ENCODE measurements at regions of chr3 and their contacts with region 1.

Region 1: DNA sequence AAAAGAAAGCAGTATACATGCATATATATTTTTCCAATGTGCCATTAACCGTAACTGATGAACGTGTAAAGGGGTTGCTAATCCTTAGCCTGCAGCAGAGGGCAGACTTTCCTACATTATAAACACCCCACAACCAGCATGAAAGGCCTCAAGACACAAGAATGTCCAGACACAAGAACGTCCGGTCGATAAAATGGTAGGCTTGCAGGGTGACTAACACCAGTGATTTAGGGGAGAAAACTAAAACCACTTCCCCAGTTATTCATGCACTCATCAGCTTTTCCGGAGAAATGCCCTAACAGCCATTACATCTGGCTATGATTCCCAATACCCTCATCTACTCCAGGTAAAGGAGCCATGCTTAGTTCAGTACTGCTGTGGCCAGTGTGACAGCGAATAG is 57.4 kb downstream of the LRTM1 start:
- DNase-seq: peak; percentile 85
- ATAC-seq: peak; percentile 94
- H3K4me3 ChIP-seq: no peak overlapping the region
- H3K27ac ChIP-seq: peak overlapping the region; percentile 38; the same call in 1 of the 2 replicates
- H3K4me1 ChIP-seq: peaks cover 21% of the 10 kb centered on the region
- H3K27me3 ChIP-seq: no peaks in the 10 kb centered on the region
- CTCF ChIP-seq: peak; percentile 85

Region 2: GRCh38 chr3:53974324-53974723 is 896.1 kb before region 1 on chr3:
- CTCF ChIA-PET with region 1: no interaction called
- POLR2A ChIA-PET with region 1: no interaction called
- intact Hi-C with region 1: no loop called
- DNase-seq: no peak
- ATAC-seq: no peak
- H3K4me3 ChIP-seq: no peak overlapping the region
- H3K27ac ChIP-seq: no peak overlapping the region
- H3K4me1 ChIP-seq: no peaks in the 10 kb centered on the region
- H3K27me3 ChIP-seq: peaks cover 8% of the 10 kb centered on the region
- CTCF ChIP-seq: no peak

Region 3: GRCh38 chr3:54486317-54486716 is 384.1 kb before region 1 on chr3:
- CTCF ChIA-PET with region 1: no interaction called
- POLR2A ChIA-PET with region 1: no interaction called
- intact Hi-C with region 1: no loop called
- DNase-seq: no peak
- ATAC-seq: no peak
- H3K4me3 ChIP-seq: no peak overlapping the region
- H3K27ac ChIP-seq: no peak overlapping the region
- H3K4me1 ChIP-seq: no peaks in the 10 kb centered on the region
- H3K27me3 ChIP-seq: no peaks in the 10 kb centered on the region
- CTCF ChIP-seq: no peak

Region 4: GRCh38 chr3:54557541-54558419 is 312.6 kb before region 1 on chr3:
- CTCF ChIA-PET with region 1: no interaction called
- POLR2A ChIA-PET with region 1: no interaction called
- intact Hi-C with region 1: no loop called
- DNase-seq: no peak
- ATAC-seq: no peak
- H3K4me3 ChIP-seq: no peak overlapping the region
- H3K27ac ChIP-seq: no peak overlapping the region
- H3K4me1 ChIP-seq: no peaks in the 10 kb centered on the region
- H3K27me3 ChIP-seq: no peaks in the 10 kb centered on the region
- CTCF ChIP-seq: no peak

Region 5: DNA sequence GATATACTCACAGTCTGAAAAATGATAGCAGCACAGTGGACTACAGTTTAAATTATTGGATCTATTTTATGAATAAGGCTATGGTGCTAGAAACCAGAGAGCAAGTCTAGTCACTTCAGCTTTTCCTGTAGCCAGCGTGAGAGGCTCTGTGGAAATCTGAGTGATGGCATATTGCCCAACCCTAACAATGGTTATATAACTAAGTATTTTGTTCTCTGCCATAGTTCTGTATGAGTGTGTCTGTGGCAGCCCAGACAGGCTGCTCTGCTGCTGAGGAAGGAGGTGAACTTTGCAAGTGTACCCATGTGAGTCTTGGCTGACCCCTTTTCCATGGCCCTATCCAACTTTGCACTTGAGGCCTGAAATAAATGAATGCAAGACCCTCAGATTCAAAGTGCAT is 48.2 kb before region 1 on chr3:
- CTCF ChIA-PET with region 1: no interaction called
- POLR2A ChIA-PET with region 1: no interaction called
- intact Hi-C with region 1: no loop called
- DNase-seq: peak; percentile 18
- ATAC-seq: no peak
- H3K4me3 ChIP-seq: no peak overlapping the region
- H3K27ac ChIP-seq: no peak overlapping the region
- H3K4me1 ChIP-seq: no peaks in the 10 kb centered on the region
- H3K27me3 ChIP-seq: peaks cover 38% of the 10 kb centered on the region
- CTCF ChIP-seq: no peak

Region 6: GRCh38 chr3:54882129-54882833 is 11.9 kb after region 1 on chr3:
- CTCF ChIA-PET with region 1: no interaction called
- POLR2A ChIA-PET with region 1: no interaction called
- intact Hi-C with region 1: loop called (anchors 1 kb)
- DNase-seq: peak; percentile 95
- ATAC-seq: peak; percentile 90
- H3K4me3 ChIP-seq: no peak overlapping the region
- H3K27ac ChIP-seq: peak overlapping the region; percentile 76
- H3K4me1 ChIP-seq: peaks cover 24% of the 10 kb centered on the region
- H3K27me3 ChIP-seq: no peaks in the 10 kb centered on the region
- CTCF ChIP-seq: no peak

Region 7: DNA sequence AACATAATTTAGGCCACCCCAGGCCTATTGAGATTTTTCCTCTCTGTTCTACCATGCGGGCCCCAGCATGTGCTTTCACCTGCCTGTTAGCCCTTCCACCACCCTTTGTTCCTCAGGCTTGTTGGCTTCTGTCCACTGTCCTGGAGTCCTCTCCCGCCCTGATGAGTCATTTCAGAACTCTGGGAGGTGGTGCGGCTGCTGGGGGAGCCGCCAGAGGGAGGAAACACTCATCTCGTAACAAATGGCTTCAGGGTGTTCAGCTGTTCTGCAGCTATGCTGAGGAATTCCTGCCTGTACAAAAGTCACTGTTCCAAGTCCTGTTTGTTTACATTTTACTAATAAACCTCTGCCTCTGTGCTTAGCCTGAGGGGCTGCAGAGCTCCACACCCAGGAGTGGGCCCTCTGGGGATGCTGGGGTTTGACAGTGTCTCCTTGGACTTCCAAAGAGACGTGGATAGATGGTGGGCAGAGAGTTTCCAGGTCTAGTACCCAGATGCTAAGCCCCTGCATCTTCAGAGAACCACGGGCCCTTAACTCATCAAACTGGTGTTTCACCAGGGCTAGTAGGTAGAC is 21.2 kb after region 1 on chr3:
- CTCF ChIA-PET with region 1: no interaction called
- POLR2A ChIA-PET with region 1: no interaction called
- intact Hi-C with region 1: loop called (anchors 1 kb)
- DNase-seq: peak; percentile 99
- ATAC-seq: peak; percentile 91
- H3K4me3 ChIP-seq: no peak overlapping the region; the same call in 1 of the 2 replicates
- H3K27ac ChIP-seq: peak overlapping the region; percentile 88
- H3K4me1 ChIP-seq: peaks cover 22% of the 10 kb centered on the region
- H3K27me3 ChIP-seq: no peaks in the 10 kb centered on the region
- CTCF ChIP-seq: peak; percentile 41; the same call in 1 of the 2 replicates

Region 8: DNA sequence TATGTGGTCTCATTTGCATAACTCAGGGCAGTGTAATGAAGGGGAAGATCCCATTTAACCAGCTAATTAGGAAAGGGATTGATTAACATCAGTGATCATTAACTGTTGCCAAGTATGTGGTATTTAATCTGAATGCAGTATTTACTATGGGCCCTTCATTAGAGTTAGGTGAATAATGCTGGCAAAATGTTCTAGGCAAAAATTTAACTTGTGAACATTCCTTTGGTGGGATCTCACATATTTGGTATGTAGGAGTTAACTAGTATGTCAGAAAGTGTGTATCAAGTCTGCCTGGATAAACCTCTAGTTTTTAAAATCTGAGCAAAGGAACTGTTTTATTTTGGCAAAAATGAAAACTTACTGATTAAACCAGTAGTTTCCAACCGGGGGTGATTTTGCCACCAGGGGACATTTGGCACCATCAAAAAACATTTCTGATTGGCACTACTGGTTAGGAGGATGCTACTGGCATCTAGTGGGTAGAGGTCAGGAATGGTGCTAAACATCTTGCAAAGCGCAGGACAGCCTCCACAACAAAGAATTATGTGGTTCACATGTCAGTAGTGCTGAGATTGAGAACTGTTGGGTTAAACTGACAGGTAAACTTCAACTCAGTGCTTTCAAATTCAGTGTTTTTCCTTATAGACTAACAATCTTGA is 34.9 kb after region 1 on chr3:
- CTCF ChIA-PET with region 1: no interaction called
- POLR2A ChIA-PET with region 1: no interaction called
- intact Hi-C with region 1: loop called (anchors 1 kb)
- DNase-seq: no peak
- ATAC-seq: peak; percentile 49; the same call in 1 of the 2 replicates
- H3K4me3 ChIP-seq: no peak overlapping the region
- H3K27ac ChIP-seq: no peak overlapping the region
- H3K4me1 ChIP-seq: no peaks in the 10 kb centered on the region
- H3K27me3 ChIP-seq: no peaks in the 10 kb centered on the region
- CTCF ChIP-seq: no peak

Region 9: GRCh38 chr3:55013145-55013925 is 142.9 kb after region 1 on chr3:
- CTCF ChIA-PET with region 1: interaction called, 3 read pairs
- POLR2A ChIA-PET with region 1: no interaction called
- intact Hi-C with region 1: loop called (anchors 1 kb)
- DNase-seq: peak; percentile 20
- ATAC-seq: peak; percentile 31; the same call in 1 of the 2 replicates
- H3K4me3 ChIP-seq: no peak overlapping the region
- H3K27ac ChIP-seq: no peak overlapping the region
- H3K4me1 ChIP-seq: no peaks in the 10 kb centered on the region
- H3K27me3 ChIP-seq: 0 out of 2 replicates have a peak, but pooled peaks cover 5% of the 10 kb centered on the region
- CTCF ChIP-seq: peak; percentile 46; the same call in 1 of the 2 replicates

Region 10: DNA sequence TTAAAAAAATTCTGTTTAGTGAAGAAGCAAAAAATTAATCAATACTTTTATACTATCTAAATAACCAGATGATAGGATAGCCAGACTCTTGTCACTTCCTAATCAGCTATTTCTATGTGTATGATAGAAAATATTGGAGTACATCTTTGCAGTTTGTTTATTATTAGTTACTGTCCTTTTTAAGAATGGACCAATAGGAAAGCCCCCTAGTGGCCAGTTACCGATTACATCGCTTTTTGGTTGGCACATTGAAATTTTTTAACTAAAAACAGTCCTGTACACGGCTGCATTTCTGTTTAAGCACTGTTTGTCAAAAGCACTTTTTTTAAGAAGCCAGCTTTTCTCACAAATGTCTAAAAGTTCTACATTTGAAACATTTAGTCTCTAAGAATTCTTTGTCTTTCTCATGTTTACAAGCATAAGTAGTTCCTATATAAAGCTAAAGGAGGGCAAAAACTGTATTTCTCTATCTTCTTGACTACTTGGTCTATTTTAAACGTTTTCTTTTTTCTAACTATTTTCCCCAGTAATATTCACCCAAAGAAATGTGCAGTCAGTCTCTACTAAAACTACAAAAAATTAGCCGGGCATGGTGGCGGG is 310.6 kb after region 1 on chr3:
- CTCF ChIA-PET with region 1: no interaction called
- POLR2A ChIA-PET with region 1: no interaction called
- intact Hi-C with region 1: loop called (anchors 1 kb)
- DNase-seq: peak; percentile 73
- ATAC-seq: peak; percentile 46
- H3K4me3 ChIP-seq: no peak overlapping the region
- H3K27ac ChIP-seq: no peak overlapping the region
- H3K4me1 ChIP-seq: no peaks in the 10 kb centered on the region
- H3K27me3 ChIP-seq: peaks cover 8% of the 10 kb centered on the region
- CTCF ChIP-seq: peak; percentile 84